Common myeloid progenitor, CD34-positive (primary cell): ENCODE measurements at regions of chr2 and their contacts with region 1.

Region 1: GRCh38 chr2:64635976-64636911 is 17.5 kb downstream of the SERTAD2 start:
- DNase-seq: peak in 2 of 3 donors; percentile 72 to 78
- H3K4me3 ChIP-seq: peak overlapping the region in 6 of 7 experiments; percentile 16 to 49 (median 28)
- H3K27ac ChIP-seq: peak overlapping the region; percentile 75 to 84
- H3K4me1 ChIP-seq: peaks cover 38 to 71% (median 57%) of the 10 kb centered on the region in 4 experiments
- H3K27me3 ChIP-seq: no peaks in the 10 kb centered on the region

Region 2: DNA sequence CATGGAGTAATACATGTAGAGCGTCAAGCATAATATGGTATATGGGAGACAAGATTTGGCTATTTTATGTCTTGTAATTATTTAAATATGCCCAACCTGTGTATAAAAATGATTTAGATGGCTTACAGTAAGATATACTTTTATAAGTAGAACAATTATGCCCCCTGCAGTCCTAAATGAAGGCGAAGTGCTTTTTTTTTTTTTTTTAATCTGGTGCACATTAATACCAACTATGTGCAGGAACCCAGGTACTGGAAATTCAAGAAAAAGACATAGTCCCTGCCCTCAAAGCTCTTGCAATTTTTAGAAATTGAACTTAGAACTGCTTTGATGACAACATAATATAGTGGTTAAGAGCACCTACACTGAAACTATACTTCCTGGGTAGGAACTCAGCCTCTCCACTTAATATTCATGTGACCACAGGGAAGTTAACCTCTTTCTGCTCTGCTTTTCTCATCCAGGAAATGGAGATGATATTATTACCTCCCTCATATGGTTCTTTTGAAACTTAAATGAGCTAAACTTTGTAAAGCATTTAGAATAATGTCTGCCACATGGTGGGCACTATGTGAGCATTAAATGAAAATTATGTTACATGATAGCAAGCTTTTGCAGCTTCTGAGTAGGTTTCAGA is 74.0 kb before region 1 on chr2:
- CTCF ChIA-PET with region 1: no interaction called
- POLR2A ChIA-PET with region 1: no interaction called
- DNase-seq: peak; percentile 48 to 74 (median 71)
- H3K4me3 ChIP-seq: no peak overlapping the region
- H3K27ac ChIP-seq: no peak overlapping the region
- H3K4me1 ChIP-seq: peaks cover 6 to 24% (median 12%) of the 10 kb centered on the region in 4 experiments
- H3K27me3 ChIP-seq: no peaks in the 10 kb centered on the region

Region 3: DNA sequence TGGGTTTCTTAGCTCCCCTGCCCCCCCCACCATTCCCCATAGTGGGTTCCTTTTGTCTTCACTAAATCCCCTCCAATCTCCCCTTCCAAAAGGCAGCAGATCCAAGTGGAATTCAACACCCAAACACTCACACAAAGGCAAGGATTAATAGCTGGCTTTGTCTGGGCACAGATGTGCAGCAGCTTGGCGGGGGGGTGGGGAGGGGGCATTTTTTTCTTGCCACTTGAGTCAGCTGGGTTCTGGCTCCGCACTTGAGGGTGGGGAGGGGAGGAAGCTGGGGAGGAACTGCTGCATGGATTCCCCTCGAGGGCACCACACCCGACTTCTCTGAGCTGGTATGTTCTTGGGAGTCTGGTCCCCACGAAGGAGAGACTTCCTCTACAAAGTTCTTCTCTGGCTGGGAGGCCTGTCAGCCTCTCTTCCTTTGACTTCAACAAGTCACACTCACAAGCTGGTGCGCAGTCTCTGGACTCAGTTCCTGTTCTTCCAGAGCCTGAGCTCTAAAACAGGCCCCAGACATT is 18.6 kb before region 1 on chr2:
- CTCF ChIA-PET with region 1: interaction called, 28 read pairs
- POLR2A ChIA-PET with region 1: interaction called, 4 read pairs
- DNase-seq: peak in 2 of 3 donors; percentile 54 to 59
- H3K4me3 ChIP-seq: no peak overlapping the region
- H3K27ac ChIP-seq: no peak overlapping the region
- H3K4me1 ChIP-seq: peaks cover 5 to 31% (median 16%) of the 10 kb centered on the region in 4 experiments
- H3K27me3 ChIP-seq: no peaks in the 10 kb centered on the region

Region 4: GRCh38 chr2:64666810-64667438 is 30.7 kb after region 1 on chr2:
- CTCF ChIA-PET with region 1: no interaction called
- POLR2A ChIA-PET with region 1: no interaction called
- DNase-seq: peak in 1 of 3 donors; percentile 14
- H3K4me3 ChIP-seq: peak overlapping the region in 4 of 7 experiments; percentile 16 to 54 (median 24)
- H3K27ac ChIP-seq: peak overlapping the region in 1 of 2 experiments; percentile 41
- H3K4me1 ChIP-seq: peaks cover 25 to 65% (median 38%) of the 10 kb centered on the region in 4 experiments
- H3K27me3 ChIP-seq: no peaks in the 10 kb centered on the region